ENCODE measurements at regions of chr16 and their contacts with region 1.

Region 1: GRCh38 chr16:27401768-27402568 is at the start of gene IL21R:
- DNase-seq: peak; percentile 78
- H3K4me3 Mint-ChIP-seq: peak within 1 kb of the TSS; percentile 100
- H3K27ac Mint-ChIP-seq: peak within 1 kb of the TSS; percentile 100
- H3K4me1 Mint-ChIP-seq: peaks cover 68% of the 10 kb centered on the region
- H3K27me3 Mint-ChIP-seq: no peaks in the 10 kb centered on the region
- total RNA-seq, gene IL21R: 101 and 104 TPM in 2 replicates

Region 2: GRCh38 chr16:27203429-27204231 is 198.3 kb before region 1 on chr16 and contains the start of gene KDM8:
- intact Hi-C with region 1: loop called (anchors 1 kb)
- DNase-seq: peak; percentile 100
- H3K4me3 Mint-ChIP-seq: peak within 1 kb of the TSS; percentile 97
- H3K27ac Mint-ChIP-seq: peak within 1 kb of the TSS; percentile 99
- H3K4me1 Mint-ChIP-seq: peaks cover 53% of the 10 kb centered on the region
- H3K27me3 Mint-ChIP-seq: no peaks in the 10 kb centered on the region
- total RNA-seq, gene KDM8: 12.5 and 14.5 TPM in 2 replicates

Region 3: DNA sequence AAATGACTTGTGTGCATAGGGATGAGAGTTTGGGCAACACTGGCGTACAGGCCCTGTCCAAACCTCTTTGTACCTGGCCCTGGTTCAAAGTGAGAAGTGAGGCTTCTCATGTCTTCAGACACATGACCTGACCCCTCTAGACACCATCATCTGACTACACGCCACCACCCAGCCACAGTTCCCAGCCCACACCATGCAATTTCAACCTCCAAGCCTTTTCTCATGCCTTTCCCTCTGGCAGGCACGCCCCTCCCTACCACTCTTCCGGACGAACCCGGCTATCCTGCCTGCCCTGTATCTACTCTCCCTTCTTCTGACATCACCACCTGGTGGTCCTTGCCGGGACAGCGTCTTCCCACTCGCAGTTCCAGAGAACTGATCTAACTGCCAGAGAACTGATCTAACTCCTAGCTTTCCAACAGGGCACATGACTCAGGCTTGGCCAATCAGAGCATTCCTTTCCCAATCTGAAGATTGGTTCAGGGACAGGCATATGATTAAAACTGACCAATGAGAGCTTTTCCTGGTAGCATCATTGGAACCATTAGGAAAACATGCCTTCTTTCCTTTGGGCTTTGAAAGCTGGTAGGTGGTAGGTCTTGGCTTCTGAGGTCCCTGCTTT is 27.1 kb before region 1 on chr16:
- intact Hi-C with region 1: loop called (anchors 1 kb)
- DNase-seq: no peak
- H3K4me3 Mint-ChIP-seq: no peak overlapping the region
- H3K27ac Mint-ChIP-seq: no peak overlapping the region
- H3K4me1 Mint-ChIP-seq: peaks cover 29% of the 10 kb centered on the region
- H3K27me3 Mint-ChIP-seq: no peaks in the 10 kb centered on the region

Region 4: DNA sequence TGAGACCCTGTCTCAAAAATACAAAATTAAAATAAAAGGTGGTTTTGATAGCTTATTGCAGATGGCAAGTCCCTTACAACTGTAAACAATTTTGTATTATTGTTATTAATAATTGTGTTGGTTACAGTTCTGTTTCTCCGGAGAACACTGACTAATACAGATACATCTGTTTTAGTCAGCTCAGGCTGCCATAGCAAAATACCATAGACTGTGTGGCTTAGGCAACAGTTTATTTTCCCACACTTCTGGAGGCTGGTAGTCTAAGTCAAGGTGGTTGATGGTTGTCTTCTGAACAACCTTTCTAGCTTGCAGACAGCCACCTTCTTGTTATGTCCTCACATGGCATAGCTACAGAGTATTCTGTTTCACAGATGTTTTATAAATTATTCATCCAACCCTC is 14.2 kb before region 1 on chr16:
- intact Hi-C with region 1: loop called (anchors 1 kb)
- DNase-seq: no peak
- H3K4me3 Mint-ChIP-seq: no peak overlapping the region
- H3K27ac Mint-ChIP-seq: peak overlapping the region; percentile 76
- H3K4me1 Mint-ChIP-seq: peaks cover 46% of the 10 kb centered on the region
- H3K27me3 Mint-ChIP-seq: no peaks in the 10 kb centered on the region

Region 5: GRCh38 chr16:27426423-27427408 is 24.7 kb after region 1 on chr16:
- intact Hi-C with region 1: loop called (anchors 1 kb)
- DNase-seq: peak; percentile 72
- H3K4me3 Mint-ChIP-seq: peak overlapping the region; percentile 24
- H3K27ac Mint-ChIP-seq: peak overlapping the region; percentile 81
- H3K4me1 Mint-ChIP-seq: peaks cover 78% of the 10 kb centered on the region
- H3K27me3 Mint-ChIP-seq: no peaks in the 10 kb centered on the region

Region 6: GRCh38 chr16:27436921-27437650 is 35.1 kb after region 1 on chr16:
- intact Hi-C with region 1: no loop called
- DNase-seq: no peak
- H3K4me3 Mint-ChIP-seq: no peak overlapping the region
- H3K27ac Mint-ChIP-seq: peak overlapping the region; percentile 63
- H3K4me1 Mint-ChIP-seq: peaks cover 24% of the 10 kb centered on the region
- H3K27me3 Mint-ChIP-seq: peaks cover 2% of the 10 kb centered on the region

Region 7: DNA sequence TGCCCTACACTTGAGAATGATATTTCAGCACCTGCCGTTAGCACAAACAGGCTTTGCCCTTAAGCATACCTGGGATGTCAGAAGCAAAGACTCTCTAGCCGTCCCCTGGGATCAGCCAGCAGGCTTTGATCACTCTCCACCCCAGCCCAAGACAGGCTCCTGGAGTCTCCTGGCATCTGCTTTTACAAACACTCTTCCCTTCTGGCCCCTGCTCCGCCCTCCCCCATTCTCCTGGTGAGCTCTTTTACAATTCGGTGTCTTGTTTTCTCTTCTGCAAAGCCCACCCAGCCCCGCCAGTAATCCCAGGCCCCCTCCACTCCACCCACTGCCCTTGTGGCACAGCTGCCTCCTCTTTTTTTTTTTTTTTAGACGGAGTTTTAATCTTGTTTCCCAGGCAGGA is 198.4 kb after region 1 on chr16:
- intact Hi-C with region 1: no loop called
- DNase-seq: no peak
- H3K4me3 Mint-ChIP-seq: no peak overlapping the region
- H3K27ac Mint-ChIP-seq: no peak overlapping the region
- H3K4me1 Mint-ChIP-seq: peaks cover 4% of the 10 kb centered on the region
- H3K27me3 Mint-ChIP-seq: no peaks in the 10 kb centered on the region

Measured in activated T-helper 1 cell treated with anti-CD3 and anti-CD28 coated beads, Interleukin-12 subunit alpha, Interleukin-12 subunit beta, Interleukin-2, Interleukin-4 antibody, amounts not matched to agents 30 ng/mL and 10 ng/mL and 1 ng/mL, durations not matched to agents 14 hours and 24 hours and 36 hours (primary cell).